Sigmoid colon (tissue), 7 donors: ENCODE measurements at regions of chr4 and their contacts with region 1.

Region 1: GRCh38 chr4:10173037-10173753 is 56.6 kb upstream of the WDR1 start:
- DNase-seq: peak; percentile 83
- H3K4me3 ChIP-seq: no peak overlapping the region
- H3K27ac ChIP-seq: peak overlapping the region; percentile 82 to 87 (median 84)
- H3K4me1 ChIP-seq: peaks cover 0 to 38% (median 36%) of the 10 kb centered on the region in 4 donors
- H3K27me3 ChIP-seq: no peaks in the 10 kb centered on the region
- CTCF ChIP-seq: peak in 2 of 4 experiments; percentile 16 to 24
- EP300 ChIP-seq: peak; percentile 11 to 67 (median 25)
- POLR2A ChIP-seq: no peak

Region 2: DNA sequence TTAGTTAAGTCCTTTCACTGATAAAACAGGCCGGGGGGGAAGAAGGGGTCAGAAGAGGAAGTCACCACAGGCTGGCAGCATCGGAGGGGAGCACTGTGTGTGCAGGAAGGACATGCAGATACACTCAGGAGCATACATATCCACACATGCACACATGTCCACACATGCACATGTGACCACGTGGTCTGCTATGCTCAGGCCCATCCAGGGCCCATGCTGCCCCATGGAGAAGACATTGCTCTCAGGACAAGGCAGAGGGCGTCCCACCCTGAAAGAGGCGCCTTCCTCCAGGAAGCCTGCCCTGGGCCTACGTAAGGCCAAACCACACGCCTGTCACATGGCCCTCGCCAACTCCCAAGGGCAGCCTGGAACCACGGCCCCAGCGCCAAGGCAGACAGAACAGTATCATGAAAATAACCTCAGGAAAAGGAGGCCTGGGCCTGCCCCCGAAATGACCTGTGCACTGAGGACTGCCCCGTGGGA is 72.4 kb before region 1 on chr4:
- intact Hi-C with region 1: loop called (anchors 5 kb)
- DNase-seq: peak; percentile 75
- H3K4me3 ChIP-seq: no peak overlapping the region
- H3K27ac ChIP-seq: peak overlapping the region; percentile 90 to 98 (median 96)
- H3K4me1 ChIP-seq: peaks cover 0 to 100% (median 100%) of the 10 kb centered on the region in 4 donors
- H3K27me3 ChIP-seq: no peaks in the 10 kb centered on the region
- CTCF ChIP-seq: no peak
- EP300 ChIP-seq: no peak
- POLR2A ChIP-seq: no peak

Region 3: GRCh38 chr4:10116580-10117358 is 56.4 kb before region 1 on chr4 and contains the start of gene WDR1:
- intact Hi-C with region 1: loop called (anchors 5 kb)
- DNase-seq: peak; percentile 99
- H3K4me3 ChIP-seq: peak within 1 kb of the TSS; percentile 71 to 94 (median 86)
- H3K27ac ChIP-seq: peak within 1 kb of the TSS; percentile 90 to 98 (median 96)
- H3K4me1 ChIP-seq: peaks cover 0 to 65% (median 59%) of the 10 kb centered on the region in 4 donors
- H3K27me3 ChIP-seq: no peaks in the 10 kb centered on the region
- CTCF ChIP-seq: no peak
- EP300 ChIP-seq: peak in 1 of 4 donors; percentile 8
- POLR2A ChIP-seq: peak; percentile 98 to 99
- total RNA-seq, gene WDR1: 171 to 267 (median 238) TPM

Region 4: GRCh38 chr4:10232114-10232513 is 58.9 kb after region 1 on chr4:
- intact Hi-C with region 1: loop called (anchors 2 kb)
- DNase-seq: no peak
- H3K4me3 ChIP-seq: no peak overlapping the region
- H3K27ac ChIP-seq: peak overlapping the region; percentile 49 to 87 (median 72)
- H3K4me1 ChIP-seq: peaks cover 0 to 37% (median 21%) of the 10 kb centered on the region in 4 donors
- H3K27me3 ChIP-seq: no peaks in the 10 kb centered on the region
- CTCF ChIP-seq: no peak
- EP300 ChIP-seq: peak in 2 of 4 donors; percentile 36 to 86
- POLR2A ChIP-seq: no peak